Caco-2 (cell line): ENCODE measurements at regions of chr13 and their contacts with region 1.

Region 1: GRCh38 chr13:90839061-90839460 is 508.4 kb upstream of the MIR17HG start:
- DNase-seq: peak; percentile 89 to 94
- H3K4me3 ChIP-seq: no peak overlapping the region
- H3K4me3 Mint-ChIP-seq: no peak overlapping the region
- H3K27ac Mint-ChIP-seq: no peak overlapping the region
- H3K4me1 ChIP-seq: peaks cover 36% of the 10 kb centered on the region
- H3K4me1 Mint-ChIP-seq: peaks cover 36% of the 10 kb centered on the region
- H3K27me3 ChIP-seq: no peaks in the 10 kb centered on the region
- H3K27me3 Mint-ChIP-seq: no peaks in the 10 kb centered on the region
- CTCF ChIP-seq: no peak

Region 2: GRCh38 chr13:90445179-90445578 is 393.9 kb before region 1 on chr13:
- CTCF ChIA-PET with region 1: no interaction called
- POLR2A ChIA-PET with region 1: no interaction called
- intact Hi-C with region 1: loop called (anchors 1 kb)
- DNase-seq: peak; percentile 53 to 55
- H3K4me3 ChIP-seq: no peak overlapping the region
- H3K4me3 Mint-ChIP-seq: no peak overlapping the region
- H3K27ac Mint-ChIP-seq: peak overlapping the region; percentile 85
- H3K4me1 ChIP-seq: peaks cover 38% of the 10 kb centered on the region
- H3K4me1 Mint-ChIP-seq: peaks cover 23% of the 10 kb centered on the region
- H3K27me3 ChIP-seq: no peaks in the 10 kb centered on the region
- H3K27me3 Mint-ChIP-seq: no peaks in the 10 kb centered on the region
- CTCF ChIP-seq: no peak

Region 3: GRCh38 chr13:90455823-90456222 is 383.2 kb before region 1 on chr13:
- CTCF ChIA-PET with region 1: no interaction called
- POLR2A ChIA-PET with region 1: no interaction called
- intact Hi-C with region 1: loop called (anchors 1 kb)
- DNase-seq: peak in 1 of 2 experiments; percentile 15
- H3K4me3 ChIP-seq: no peak overlapping the region
- H3K4me3 Mint-ChIP-seq: no peak overlapping the region
- H3K27ac Mint-ChIP-seq: no peak overlapping the region
- H3K4me1 ChIP-seq: no peaks in the 10 kb centered on the region
- H3K4me1 Mint-ChIP-seq: no peaks in the 10 kb centered on the region
- H3K27me3 ChIP-seq: no peaks in the 10 kb centered on the region
- H3K27me3 Mint-ChIP-seq: no peaks in the 10 kb centered on the region
- CTCF ChIP-seq: peak; percentile 35 to 44

Region 4: DNA sequence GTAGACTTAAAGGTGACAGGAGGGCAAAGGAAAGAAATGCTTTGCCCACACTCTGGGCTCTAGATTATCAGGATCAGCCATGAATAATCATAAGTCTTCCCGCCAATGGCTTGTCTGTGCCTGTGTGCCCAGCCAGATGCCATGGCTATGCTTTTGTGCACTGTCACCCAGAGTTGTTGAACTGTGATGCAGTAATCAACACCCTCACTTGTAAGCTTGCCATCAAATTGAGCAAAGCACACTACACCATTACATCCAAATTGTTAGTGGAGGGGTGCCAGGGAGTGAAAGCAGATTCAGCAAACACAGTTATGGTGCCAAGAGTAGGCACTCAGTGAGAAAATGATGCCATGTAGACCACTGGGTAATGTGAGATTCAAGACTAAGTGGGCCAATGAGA is 336.9 kb before region 1 on chr13:
- CTCF ChIA-PET with region 1: no interaction called
- POLR2A ChIA-PET with region 1: no interaction called
- intact Hi-C with region 1: loop called (anchors 1 kb)
- DNase-seq: no peak
- H3K4me3 ChIP-seq: no peak overlapping the region
- H3K4me3 Mint-ChIP-seq: no peak overlapping the region
- H3K27ac Mint-ChIP-seq: peak overlapping the region; percentile 73
- H3K4me1 ChIP-seq: peaks cover 65% of the 10 kb centered on the region
- H3K4me1 Mint-ChIP-seq: peaks cover 50% of the 10 kb centered on the region
- H3K27me3 ChIP-seq: no peaks in the 10 kb centered on the region
- H3K27me3 Mint-ChIP-seq: no peaks in the 10 kb centered on the region
- CTCF ChIP-seq: no peak

Region 5: DNA sequence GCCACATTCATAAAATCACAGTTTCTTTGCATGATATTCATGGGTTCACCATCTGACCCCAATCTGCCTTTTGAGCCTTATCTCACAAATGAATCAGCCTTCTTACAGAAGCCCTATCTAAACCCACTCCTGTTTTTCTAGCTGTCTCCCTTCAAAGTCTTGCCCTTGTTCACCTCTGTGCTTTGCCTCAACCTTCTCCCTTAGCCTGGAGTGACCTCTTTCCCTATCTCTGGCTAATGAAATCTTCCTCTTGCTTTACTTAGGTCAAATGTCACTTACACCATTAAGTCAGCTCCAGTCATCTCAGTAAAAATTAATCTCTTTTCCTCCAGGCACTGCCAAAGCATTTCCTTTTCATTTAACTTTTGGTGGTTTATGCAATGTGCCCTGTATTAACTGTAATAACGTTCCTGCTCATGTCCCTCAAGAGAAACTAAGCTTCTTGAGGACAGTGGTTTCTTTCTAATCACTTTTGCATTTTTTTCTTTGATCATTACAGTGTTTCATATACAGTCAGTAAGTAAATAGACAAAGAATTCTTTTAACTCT is 88.0 kb before region 1 on chr13:
- CTCF ChIA-PET with region 1: no interaction called
- POLR2A ChIA-PET with region 1: no interaction called
- intact Hi-C with region 1: loop called (anchors 2 kb)
- DNase-seq: peak in 1 of 2 experiments; percentile 12
- H3K4me3 ChIP-seq: no peak overlapping the region
- H3K4me3 Mint-ChIP-seq: no peak overlapping the region
- H3K27ac Mint-ChIP-seq: no peak overlapping the region
- H3K4me1 ChIP-seq: peaks cover 10% of the 10 kb centered on the region; the same call in 1 of the 2 replicates
- H3K4me1 Mint-ChIP-seq: peaks cover 16% of the 10 kb centered on the region
- H3K27me3 ChIP-seq: no peaks in the 10 kb centered on the region
- H3K27me3 Mint-ChIP-seq: no peaks in the 10 kb centered on the region
- CTCF ChIP-seq: no peak

Region 6: DNA sequence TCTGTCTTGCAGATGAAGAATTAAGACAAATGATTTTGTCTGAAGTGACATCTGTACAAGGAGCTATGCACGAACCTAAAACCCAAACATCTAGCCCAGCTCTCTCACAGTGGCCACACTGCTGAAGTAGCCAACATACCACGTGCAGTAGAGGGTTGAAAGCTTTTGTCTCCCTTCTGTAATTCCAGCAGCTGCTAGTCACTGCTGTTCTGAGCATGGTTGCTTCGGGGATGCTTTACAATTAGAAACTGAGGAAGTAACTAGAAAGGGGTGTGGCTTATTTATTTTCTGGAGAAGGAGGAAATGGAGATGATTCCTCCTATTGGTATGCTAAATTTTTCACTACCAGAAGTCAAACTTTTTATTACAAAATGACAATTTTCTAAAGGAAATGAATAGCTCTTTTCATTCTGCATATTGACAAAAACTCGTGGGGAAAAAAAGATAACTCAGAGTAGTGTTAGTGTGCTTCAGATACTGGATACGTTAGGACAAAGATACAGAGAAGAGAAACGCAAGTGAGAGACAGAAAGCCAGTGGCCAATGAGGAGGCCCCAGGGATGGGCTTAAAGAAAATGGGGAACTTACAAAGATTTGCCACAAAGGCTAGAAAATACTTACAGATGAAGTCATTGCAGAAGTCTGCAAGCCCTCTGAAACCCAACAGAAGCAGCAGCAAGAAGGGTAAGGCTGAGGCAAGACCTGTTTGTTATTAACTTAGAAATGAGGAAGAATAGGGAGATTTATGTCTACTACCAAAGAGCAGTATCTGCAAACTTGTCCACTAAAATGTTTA is 315.7 kb after region 1 on chr13:
- CTCF ChIA-PET with region 1: no interaction called
- POLR2A ChIA-PET with region 1: no interaction called
- intact Hi-C with region 1: loop called (anchors 1 kb)
- DNase-seq: peak; percentile 36 to 50
- H3K4me3 ChIP-seq: peak overlapping the region; percentile 20
- H3K4me3 Mint-ChIP-seq: peak overlapping the region; percentile 72
- H3K27ac Mint-ChIP-seq: peak overlapping the region; percentile 96
- H3K4me1 ChIP-seq: peaks cover 71% of the 10 kb centered on the region
- H3K4me1 Mint-ChIP-seq: peaks cover 49% of the 10 kb centered on the region
- H3K27me3 ChIP-seq: no peaks in the 10 kb centered on the region
- H3K27me3 Mint-ChIP-seq: no peaks in the 10 kb centered on the region
- CTCF ChIP-seq: no peak